ENCODE measurements at regions of chr19 and their contacts with region 1.

Region 1: GRCh38 chr19:13155472-13156359 is 5.5 kb downstream of the IER2 start:
- DNase-seq: no peak
- H3K4me3 ChIP-seq: peak overlapping the region; percentile 96
- CTCF ChIP-seq: no peak

Region 2: DNA sequence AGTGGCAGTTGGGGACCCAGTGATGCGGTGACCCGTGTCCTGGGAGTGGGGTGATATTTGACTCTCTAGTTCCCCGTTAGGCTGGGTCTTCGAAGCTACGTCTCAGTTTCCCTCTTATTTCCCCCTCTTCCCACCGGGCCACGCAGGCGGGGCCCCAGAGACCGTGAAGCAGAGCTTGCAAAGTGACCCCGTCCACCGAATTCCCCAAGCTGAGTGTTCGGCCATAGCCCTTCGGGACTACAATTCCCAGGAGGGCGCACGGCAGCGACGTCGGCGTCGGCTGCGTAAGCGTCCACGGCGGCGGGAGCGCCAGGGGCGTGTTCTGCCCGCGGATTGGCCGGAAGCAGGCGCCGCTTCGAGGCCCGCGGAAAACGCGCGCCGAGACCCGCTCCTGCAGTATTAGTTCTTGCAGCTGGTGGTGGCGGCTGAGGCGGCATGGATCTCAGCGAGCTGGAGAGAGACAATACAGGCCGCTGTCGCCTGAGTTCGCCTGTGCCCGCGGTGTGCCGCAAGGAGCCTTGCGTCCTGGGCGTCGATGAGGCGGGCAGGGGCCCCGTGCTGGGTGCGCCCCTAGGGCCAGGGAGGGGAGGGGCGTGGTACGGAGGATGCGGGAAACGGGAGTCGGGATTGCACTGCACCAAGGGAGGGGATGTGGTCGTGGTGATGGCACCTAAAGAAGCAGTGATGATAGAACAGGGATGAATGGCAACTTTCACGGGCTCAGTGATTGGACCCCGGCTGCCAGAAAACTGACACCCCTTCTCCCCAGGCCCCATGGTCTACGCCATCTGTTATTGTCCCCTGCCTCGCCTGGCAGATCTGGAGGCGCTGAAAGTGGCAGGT is 349.3 kb before region 1 on chr19 and contains the start of gene RNASEH2A:
- CTCF ChIA-PET with region 1: no interaction called
- POLR2A ChIA-PET with region 1: no interaction called
- DNase-seq: no peak
- H3K4me3 ChIP-seq: peak within 1 kb of the TSS; percentile 87
- CTCF ChIP-seq: no peak

Region 3: DNA sequence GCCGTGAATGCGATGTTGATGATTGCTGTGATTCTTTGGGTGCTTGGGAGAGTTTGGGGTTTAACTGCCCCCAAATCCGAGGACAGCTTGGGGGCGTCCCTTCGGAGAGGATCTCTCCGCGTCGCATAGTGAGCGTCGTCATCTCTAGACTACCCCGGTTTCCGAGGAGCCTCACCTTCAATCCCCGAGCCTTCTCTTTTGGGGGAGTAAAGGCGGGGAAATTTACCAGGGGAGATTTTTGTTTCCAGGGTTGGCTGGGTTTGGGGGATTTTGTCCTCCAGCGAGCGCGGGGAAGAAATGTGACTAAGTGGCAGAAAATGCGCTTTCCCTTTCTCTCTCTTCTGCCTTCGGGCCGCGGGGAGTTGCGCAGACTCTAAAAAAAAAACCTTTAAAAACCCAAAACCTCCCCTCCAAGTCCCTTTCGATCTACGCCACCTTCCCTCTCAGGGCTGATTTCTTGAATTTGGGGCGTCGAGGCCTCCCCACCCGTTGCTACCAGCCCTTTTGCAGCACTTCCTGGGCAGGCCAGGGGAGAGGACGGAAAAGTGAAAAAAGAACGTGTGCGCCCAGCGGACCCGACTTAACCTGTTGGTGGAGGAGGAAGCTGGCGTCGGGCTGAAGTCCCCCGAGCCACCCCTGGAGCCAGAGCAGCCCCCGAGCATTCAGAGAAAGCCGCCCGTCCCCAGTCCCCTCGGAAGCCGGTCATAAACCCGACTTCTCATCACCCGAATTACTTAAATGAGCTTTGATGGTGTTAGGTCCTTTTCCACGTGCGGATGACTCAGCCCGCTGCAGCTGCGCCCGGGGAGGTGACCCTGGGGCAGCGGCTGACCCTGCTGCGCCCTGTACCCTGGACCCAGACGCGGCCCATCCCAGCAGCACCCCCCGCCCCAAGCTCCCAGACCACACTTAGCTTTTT is 142.8 kb before region 1 on chr19:
- CTCF ChIA-PET with region 1: no interaction called
- POLR2A ChIA-PET with region 1: no interaction called
- DNase-seq: no peak
- H3K4me3 ChIP-seq: peak overlapping the region; percentile 48
- CTCF ChIP-seq: no peak

Region 4: GRCh38 chr19:13117772-13118423 is 37.8 kb before region 1 on chr19 and contains the start of gene NACC1:
- CTCF ChIA-PET with region 1: interaction called, 5 read pairs
- POLR2A ChIA-PET with region 1: interaction called, 13 read pairs
- DNase-seq: no peak
- H3K4me3 ChIP-seq: peak within 1 kb of the TSS; percentile 99
- CTCF ChIP-seq: no peak

Region 5: DNA sequence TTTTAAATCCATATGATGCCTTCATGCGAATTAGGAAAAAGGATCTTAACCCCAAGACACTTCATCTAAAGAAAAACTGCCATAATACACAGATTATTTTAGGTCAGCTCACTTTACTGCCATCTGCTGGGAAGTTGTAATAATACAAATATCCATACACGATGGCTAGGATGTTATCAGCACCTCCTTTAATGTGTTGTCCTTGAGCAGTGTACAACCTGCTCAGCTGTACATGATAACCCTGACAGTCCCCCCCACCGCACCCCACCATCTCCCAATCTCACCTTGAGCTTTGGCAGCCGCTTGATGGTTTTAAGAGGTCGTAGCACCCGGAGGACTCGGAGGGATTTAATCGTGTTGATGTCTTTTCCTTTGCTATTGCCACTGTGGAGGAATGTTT is 106.7 kb after region 1 on chr19:
- CTCF ChIA-PET with region 1: interaction called, 17 read pairs
- POLR2A ChIA-PET with region 1: interaction called, 7 read pairs
- DNase-seq: no peak
- H3K4me3 ChIP-seq: no peak overlapping the region
- CTCF ChIP-seq: peak; percentile 48

Region 6: DNA sequence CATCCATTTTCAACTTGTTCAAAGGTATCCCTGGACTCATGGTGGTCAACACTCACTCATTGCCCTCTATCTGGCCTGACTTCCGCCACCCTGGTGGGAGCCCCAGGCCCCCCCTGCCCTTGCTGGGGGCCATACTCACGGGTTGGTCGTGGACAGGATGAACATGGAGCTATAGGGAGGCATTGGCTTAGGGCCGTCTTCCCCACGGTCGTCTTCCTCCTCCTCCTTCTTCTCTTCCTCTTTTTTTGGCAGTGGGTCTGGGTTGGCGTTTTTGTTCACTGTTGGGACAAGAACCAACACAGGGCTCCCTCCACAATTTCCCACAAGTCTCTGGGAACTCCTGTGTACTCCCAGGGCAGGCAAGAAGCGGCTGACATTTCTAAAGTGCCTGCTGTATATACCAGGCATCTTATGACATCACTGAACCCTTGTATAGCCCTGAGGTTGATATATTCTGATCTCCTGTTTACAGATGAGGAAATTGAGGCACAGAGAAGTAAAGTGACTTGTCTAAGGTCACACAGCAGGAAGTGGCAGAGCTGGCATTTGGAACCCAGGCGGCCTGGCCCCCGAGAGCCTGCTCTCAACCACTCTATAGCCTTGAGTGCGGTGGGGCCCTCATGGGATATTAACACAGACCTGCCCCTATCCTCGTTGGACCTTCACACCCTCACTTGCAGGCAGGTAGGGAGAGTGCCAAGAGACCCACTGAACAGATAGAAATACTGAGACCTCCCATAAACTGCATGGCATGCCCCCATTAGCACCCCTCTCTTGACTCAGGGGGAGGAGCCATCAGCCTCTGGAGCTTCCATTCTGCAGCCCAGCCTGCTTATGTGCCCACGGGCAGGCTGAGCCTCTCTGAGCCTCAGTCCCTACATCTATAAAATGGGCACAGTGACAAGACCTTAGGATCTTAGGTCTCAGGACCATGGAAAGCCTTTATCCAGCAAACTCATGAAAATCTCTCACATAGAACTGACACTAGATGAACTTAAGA is 129.5 kb after region 1 on chr19:
- CTCF ChIA-PET with region 1: no interaction called
- POLR2A ChIA-PET with region 1: no interaction called
- DNase-seq: no peak
- H3K4me3 ChIP-seq: no peak overlapping the region
- CTCF ChIP-seq: no peak

Measured in AG04449 (cell line).